Activated CD8-positive, alpha-beta memory T cell treated with anti-CD3 and anti-CD28 coated beads, Interleukin-2, amount 10 ng/mL, durations not matched to agents 7 days and 5 days (primary cell): ENCODE measurements at regions of chr10 and their contacts with region 1.

Region 1: GRCh38 chr10:92087750-92088395 is 164.3 kb downstream of the BTAF1 start:
- DNase-seq: peak; percentile 81
- ATAC-seq: peak; percentile 99
- H3K4me3 Mint-ChIP-seq: no peak overlapping the region
- H3K27ac Mint-ChIP-seq: no peak overlapping the region
- H3K4me1 Mint-ChIP-seq: peaks cover 16% of the 10 kb centered on the region
- H3K27me3 Mint-ChIP-seq: no peaks in the 10 kb centered on the region

Region 2: GRCh38 chr10:92024700-92025099 is 63.2 kb before region 1 on chr10:
- CTCF ChIA-PET with region 1: no interaction called
- DNase-seq: no peak
- ATAC-seq: no peak
- H3K4me3 Mint-ChIP-seq: no peak overlapping the region
- H3K27ac Mint-ChIP-seq: no peak overlapping the region
- H3K4me1 Mint-ChIP-seq: no peaks in the 10 kb centered on the region
- H3K27me3 Mint-ChIP-seq: no peaks in the 10 kb centered on the region

Region 3: GRCh38 chr10:92290837-92291615 is 203.2 kb after region 1 on chr10 and contains the starts of genes CPEB3 and MARCHF5:
- CTCF ChIA-PET with region 1: interaction called, 26 read pairs
- DNase-seq: peak; percentile 97
- ATAC-seq: peak; percentile 99
- H3K4me3 Mint-ChIP-seq: peak within 1 kb of the TSS; percentile 88
- H3K27ac Mint-ChIP-seq: peak within 1 kb of the TSS; percentile 89
- H3K4me1 Mint-ChIP-seq: peaks cover 27% of the 10 kb centered on the region
- H3K27me3 Mint-ChIP-seq: no peaks in the 10 kb centered on the region
- total RNA-seq, gene CPEB3: 3.8 to 4.3 TPM
- total RNA-seq, gene MARCHF5: 21.7 to 26.4 TPM

Region 4: GRCh38 chr10:92434385-92434784 is 346.5 kb after region 1 on chr10:
- CTCF ChIA-PET with region 1: interaction called, 14 read pairs
- DNase-seq: no peak
- ATAC-seq: no peak
- H3K4me3 Mint-ChIP-seq: no peak overlapping the region
- H3K27ac Mint-ChIP-seq: no peak overlapping the region
- H3K4me1 Mint-ChIP-seq: no peaks in the 10 kb centered on the region
- H3K27me3 Mint-ChIP-seq: peaks cover 3% of the 10 kb centered on the region